ENCODE measurements at regions of chr1 and their contacts with region 1.

Region 1: DNA sequence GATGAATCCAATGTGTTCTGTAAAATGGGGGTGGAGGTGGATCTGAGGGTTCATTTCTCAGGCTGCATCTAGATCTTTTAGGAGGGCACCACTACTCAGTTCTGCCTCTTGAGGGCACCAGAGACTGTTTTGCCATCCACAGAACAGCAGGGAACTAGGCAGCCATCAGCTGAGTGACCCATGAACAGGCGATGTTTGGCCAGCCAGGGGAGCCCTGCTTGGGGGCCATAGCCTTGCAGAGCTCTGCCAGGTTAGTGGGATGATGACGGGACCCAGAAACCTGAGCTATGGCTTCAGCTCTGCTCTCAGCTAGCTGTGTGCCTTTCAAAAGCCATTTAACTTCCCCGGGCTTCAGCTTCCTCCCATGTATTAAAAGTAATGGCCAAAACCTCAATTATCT is 13.4 kb upstream of the NOS1AP start:
- DNase-seq: peak; percentile 37 to 58
- H3K4me3 ChIP-seq: no peak overlapping the region
- H3K27ac ChIP-seq: no peak overlapping the region
- H3K4me1 ChIP-seq: no peaks in the 10 kb centered on the region
- H3K27me3 ChIP-seq: no peaks in the 10 kb centered on the region
- CTCF ChIP-seq: peak; percentile 75 to 88 (median 85)
- POLR2A ChIP-seq: no peak

Region 2: GRCh38 chr1:161915051-161915503 is 141.0 kb before region 1 on chr1:
- intact Hi-C with region 1: no loop called
- DNase-seq: no peak
- H3K4me3 ChIP-seq: no peak overlapping the region
- H3K27ac ChIP-seq: no peak overlapping the region
- H3K4me1 ChIP-seq: peaks cover 0 to 3% of the 10 kb centered on the region in 2 donors
- H3K27me3 ChIP-seq: no peaks in the 10 kb centered on the region
- CTCF ChIP-seq: no peak
- POLR2A ChIP-seq: no peak

Region 3: GRCh38 chr1:162310337-162310736 is 254.3 kb after region 1 on chr1:
- intact Hi-C with region 1: no loop called
- DNase-seq: no peak
- H3K4me3 ChIP-seq: no peak overlapping the region
- H3K27ac ChIP-seq: no peak overlapping the region
- H3K4me1 ChIP-seq: no peaks in the 10 kb centered on the region
- H3K27me3 ChIP-seq: no peaks in the 10 kb centered on the region
- CTCF ChIP-seq: no peak
- POLR2A ChIP-seq: no peak

Region 4: GRCh38 chr1:162391790-162392563 is 335.9 kb after region 1 on chr1:
- intact Hi-C with region 1: loop called (anchors 5 kb)
- DNase-seq: no peak
- H3K4me3 ChIP-seq: no peak overlapping the region
- H3K27ac ChIP-seq: no peak overlapping the region
- H3K4me1 ChIP-seq: no peaks in the 10 kb centered on the region
- H3K27me3 ChIP-seq: no peaks in the 10 kb centered on the region
- CTCF ChIP-seq: peak; percentile 70 to 82 (median 81)
- POLR2A ChIP-seq: no peak

Region 5: GRCh38 chr1:162530307-162530987 is 474.4 kb after region 1 on chr1:
- intact Hi-C with region 1: no loop called
- DNase-seq: no peak
- H3K4me3 ChIP-seq: no peak overlapping the region
- H3K27ac ChIP-seq: no peak overlapping the region
- H3K4me1 ChIP-seq: no peaks in the 10 kb centered on the region
- H3K27me3 ChIP-seq: no peaks in the 10 kb centered on the region
- CTCF ChIP-seq: no peak
- POLR2A ChIP-seq: no peak